Activated CD4-positive, alpha-beta memory T cell treated with anti-CD3 and anti-CD28 coated beads for 36 hours (primary cell): ENCODE measurements at regions of chr6 and their contacts with region 1.

Region 1: GRCh38 chr6:144343701-144344428 is 58.7 kb downstream of the UTRN start:
- DNase-seq: peak; percentile 53
- H3K4me3 Mint-ChIP-seq: peak overlapping the region; percentile 95
- H3K27ac Mint-ChIP-seq: peak overlapping the region; percentile 99
- H3K4me1 Mint-ChIP-seq: peaks cover 67% of the 10 kb centered on the region
- H3K27me3 Mint-ChIP-seq: no peaks in the 10 kb centered on the region

Region 2: DNA sequence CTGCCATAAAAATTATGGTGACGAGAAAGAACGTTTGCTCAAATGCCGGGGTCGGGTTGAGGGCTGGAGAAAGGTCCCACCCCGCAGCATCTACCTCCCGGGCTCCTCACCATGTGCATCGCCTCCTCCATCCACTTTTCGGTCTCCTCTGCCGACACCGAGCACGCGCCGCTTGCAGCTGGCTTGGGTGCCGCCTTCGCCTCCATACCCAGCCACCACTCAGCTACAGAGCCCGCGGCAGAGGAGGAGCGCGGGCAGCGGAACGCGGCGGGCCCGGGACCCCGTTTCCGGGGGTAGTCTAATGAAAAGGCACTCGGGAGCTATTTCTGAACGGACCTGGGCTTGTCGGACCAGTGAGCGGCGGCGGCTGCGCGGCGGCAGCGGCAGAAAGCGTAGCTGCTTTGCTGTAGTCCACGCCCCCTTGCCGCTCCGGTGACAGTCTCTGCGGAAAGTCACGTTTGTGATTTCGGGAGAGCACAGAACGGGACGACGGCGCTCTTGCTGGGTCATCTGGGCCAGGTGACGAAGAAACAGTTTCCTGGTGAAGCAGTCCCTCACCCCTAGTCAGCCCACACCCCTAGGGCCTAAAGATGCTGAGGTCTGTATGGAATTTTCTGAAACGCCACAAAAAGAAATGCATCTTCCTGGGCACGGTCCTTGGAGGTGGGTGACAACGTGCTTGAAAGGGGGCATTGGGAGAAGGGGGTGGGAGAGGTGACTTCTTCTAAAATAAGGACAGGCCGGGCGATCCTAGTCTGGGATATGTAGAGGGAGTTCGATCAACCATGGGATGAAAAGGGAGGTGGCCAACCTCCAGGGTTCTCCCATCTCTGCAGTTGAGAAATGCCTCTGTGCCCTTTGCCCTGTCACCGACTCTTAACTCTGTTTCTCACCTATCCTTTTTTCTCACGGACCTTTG is 893.2 kb before region 1 on chr6 and contains the starts of genes ADAT2 and PEX3:
- CTCF ChIA-PET with region 1: no interaction called
- POLR2A ChIA-PET with region 1: no interaction called
- intact Hi-C with region 1: loop called (anchors 5 kb)
- DNase-seq: peak; percentile 97
- H3K4me3 Mint-ChIP-seq: peak within 1 kb of the TSS; percentile 88
- H3K27ac Mint-ChIP-seq: peak within 1 kb of the TSS; percentile 91
- H3K4me1 Mint-ChIP-seq: peaks cover 45% of the 10 kb centered on the region
- H3K27me3 Mint-ChIP-seq: no peaks in the 10 kb centered on the region
- total RNA-seq, gene ADAT2: 26.0 to 27.0 TPM
- total RNA-seq, gene PEX3: 19.7 to 21.1 TPM

Region 3: DNA sequence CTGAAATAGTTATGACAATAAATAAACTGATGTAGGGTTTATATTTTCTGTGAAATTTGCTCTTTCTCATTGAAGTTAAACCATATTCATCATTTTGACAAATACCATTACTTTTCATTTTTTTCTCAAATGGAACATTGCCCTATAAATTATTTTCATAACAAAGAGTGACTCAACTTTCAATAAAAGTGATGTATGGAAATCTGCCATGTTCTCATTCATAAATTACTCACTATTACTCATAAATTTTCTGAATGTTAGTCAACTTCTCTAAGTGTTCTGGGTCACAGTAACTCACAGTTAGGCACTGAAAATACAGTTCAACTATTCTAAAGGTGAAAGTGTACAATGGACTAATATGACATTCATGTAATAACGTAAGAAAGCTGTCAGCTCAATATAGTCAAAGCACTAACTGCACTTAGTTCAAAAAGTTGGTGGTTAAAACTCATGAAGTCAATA is 212.6 kb before region 1 on chr6:
- CTCF ChIA-PET with region 1: no interaction called
- POLR2A ChIA-PET with region 1: no interaction called
- intact Hi-C with region 1: loop called (anchors 2 kb)
- DNase-seq: no peak
- H3K4me3 Mint-ChIP-seq: peak overlapping the region; percentile 59
- H3K27ac Mint-ChIP-seq: peak overlapping the region; percentile 74
- H3K4me1 Mint-ChIP-seq: peaks cover 31% of the 10 kb centered on the region
- H3K27me3 Mint-ChIP-seq: peaks cover 3% of the 10 kb centered on the region

Region 4: GRCh38 chr6:144248476-144249301 is 95.2 kb before region 1 on chr6:
- CTCF ChIA-PET with region 1: no interaction called
- POLR2A ChIA-PET with region 1: no interaction called
- intact Hi-C with region 1: loop called (anchors 2 kb)
- DNase-seq: peak; percentile 29
- H3K4me3 Mint-ChIP-seq: peak overlapping the region; percentile 21
- H3K27ac Mint-ChIP-seq: peak overlapping the region; percentile 71
- H3K4me1 Mint-ChIP-seq: peaks cover 18% of the 10 kb centered on the region
- H3K27me3 Mint-ChIP-seq: peaks cover 22% of the 10 kb centered on the region

Region 5: DNA sequence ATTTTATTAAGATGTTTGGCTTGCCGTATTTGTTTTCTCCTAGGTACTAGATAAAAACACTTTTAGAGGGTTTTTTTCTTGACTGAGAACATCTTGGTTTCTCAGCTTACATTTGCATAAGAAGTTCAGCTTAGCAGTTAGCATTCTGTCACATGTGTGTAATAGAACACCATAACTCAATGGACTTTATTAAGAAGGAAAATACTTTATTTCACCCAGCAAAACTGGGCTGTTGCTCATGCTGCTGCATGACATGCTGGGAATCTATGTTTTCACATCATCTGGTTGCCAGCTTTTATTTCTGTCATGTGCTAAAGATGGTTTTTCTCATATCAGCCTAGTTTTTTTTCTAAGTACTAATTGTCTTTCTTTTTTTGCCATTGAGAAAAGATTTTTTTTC is 85.9 kb after region 1 on chr6:
- CTCF ChIA-PET with region 1: no interaction called
- POLR2A ChIA-PET with region 1: no interaction called
- intact Hi-C with region 1: no loop called
- DNase-seq: no peak
- H3K4me3 Mint-ChIP-seq: no peak overlapping the region
- H3K27ac Mint-ChIP-seq: no peak overlapping the region
- H3K4me1 Mint-ChIP-seq: peaks cover 11% of the 10 kb centered on the region
- H3K27me3 Mint-ChIP-seq: no peaks in the 10 kb centered on the region

Region 6: DNA sequence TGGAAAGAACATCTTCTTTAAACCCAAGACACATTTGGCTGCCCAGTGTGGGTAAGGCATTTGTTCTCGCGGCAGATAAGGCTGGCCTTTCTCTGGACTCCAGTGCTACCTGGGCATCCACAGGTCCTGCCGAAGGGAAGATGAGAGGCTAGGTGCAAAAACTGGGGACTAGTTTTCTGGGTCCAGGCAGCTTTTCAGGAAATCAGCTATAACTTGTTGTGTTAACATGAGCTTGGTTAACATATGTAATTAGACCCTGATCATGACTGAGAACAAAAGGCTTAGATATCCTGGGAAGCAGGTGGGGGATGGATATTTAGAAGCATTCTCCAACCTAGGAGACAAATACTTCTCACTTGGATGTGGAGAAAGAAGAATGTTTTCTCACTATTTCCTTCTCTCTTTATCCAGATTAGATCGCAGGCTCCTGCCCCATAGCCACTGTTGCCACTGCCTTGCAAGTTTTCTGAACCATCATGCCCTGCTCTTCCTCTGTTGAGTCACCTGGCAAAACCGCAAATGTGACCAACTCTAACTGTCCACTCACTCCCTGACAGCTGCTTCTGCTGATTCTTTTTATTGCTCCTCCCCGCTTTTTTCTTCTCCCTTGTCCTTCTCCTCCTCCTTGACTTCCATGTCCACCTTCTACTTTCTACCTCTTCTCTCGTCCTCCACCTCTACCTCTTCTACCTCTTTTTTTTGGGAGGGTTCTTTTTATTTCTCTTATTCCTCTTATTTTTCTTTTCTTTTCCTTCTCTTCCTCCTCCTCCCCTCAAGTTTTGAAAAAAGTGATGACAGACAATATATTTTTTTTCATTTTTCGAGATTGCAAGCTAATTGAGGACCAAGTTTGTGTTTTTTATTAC is 199.4 kb after region 1 on chr6:
- CTCF ChIA-PET with region 1: no interaction called
- POLR2A ChIA-PET with region 1: no interaction called
- intact Hi-C with region 1: loop called (anchors 5 kb)
- DNase-seq: peak; percentile 32
- H3K4me3 Mint-ChIP-seq: no peak overlapping the region
- H3K27ac Mint-ChIP-seq: no peak overlapping the region
- H3K4me1 Mint-ChIP-seq: peaks cover 20% of the 10 kb centered on the region
- H3K27me3 Mint-ChIP-seq: no peaks in the 10 kb centered on the region

Region 7: GRCh38 chr6:144653885-144654505 is 310.1 kb after region 1 on chr6:
- CTCF ChIA-PET with region 1: no interaction called
- POLR2A ChIA-PET with region 1: no interaction called
- intact Hi-C with region 1: loop called (anchors 5 kb)
- DNase-seq: no peak
- H3K4me3 Mint-ChIP-seq: peak overlapping the region; percentile 13
- H3K27ac Mint-ChIP-seq: no peak overlapping the region
- H3K4me1 Mint-ChIP-seq: peaks cover 42% of the 10 kb centered on the region
- H3K27me3 Mint-ChIP-seq: no peaks in the 10 kb centered on the region